HEK293 (cell line): ENCODE measurements at regions of chr19 and their contacts with region 1.

Region 1: DNA sequence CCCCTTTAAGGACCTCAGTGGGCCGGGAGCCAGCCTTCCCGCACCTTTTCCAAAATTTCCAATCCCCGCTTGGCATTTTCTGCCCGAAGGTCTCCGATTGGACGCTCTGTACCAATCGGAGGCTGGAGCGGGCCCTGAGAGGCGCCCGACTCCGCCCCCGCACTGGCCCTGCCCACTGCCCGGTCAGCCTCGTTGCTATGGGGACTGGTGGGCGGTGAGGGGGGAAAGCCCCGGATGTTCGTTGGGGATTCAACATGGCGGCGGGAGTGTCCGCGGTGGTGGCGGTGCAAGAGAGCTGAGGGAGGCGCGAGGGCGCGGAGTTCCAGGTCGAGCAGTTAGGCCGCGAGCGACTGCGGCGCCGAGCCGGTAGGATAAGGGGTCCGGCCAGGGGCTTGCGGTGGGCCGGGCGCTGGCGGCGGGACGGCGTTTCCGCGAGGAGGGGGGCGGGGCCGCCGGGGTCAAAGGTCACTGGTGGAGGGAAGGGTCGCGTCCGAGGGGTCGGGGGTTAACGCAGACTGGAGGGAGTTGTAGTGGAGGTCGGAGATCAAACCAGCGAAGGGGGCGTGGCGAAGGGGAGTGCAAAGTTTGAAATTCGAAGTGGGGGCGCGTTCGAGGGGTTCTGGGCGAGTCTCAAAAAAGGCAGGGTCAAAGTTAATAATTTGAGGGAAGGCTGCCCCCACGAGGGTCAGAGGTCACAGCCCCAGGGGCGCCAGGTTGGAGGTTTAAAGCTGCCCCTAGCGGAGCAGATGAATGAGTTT is at the start of gene PAK4:
- H3K4me3 ChIP-seq: peak within 1 kb of the TSS; percentile 67
- H3K27ac ChIP-seq: peak within 1 kb of the TSS; percentile 88
- H3K4me1 ChIP-seq: peaks cover 24% of the 10 kb centered on the region
- CTCF ChIP-seq: peak; percentile 91

Region 2: DNA sequence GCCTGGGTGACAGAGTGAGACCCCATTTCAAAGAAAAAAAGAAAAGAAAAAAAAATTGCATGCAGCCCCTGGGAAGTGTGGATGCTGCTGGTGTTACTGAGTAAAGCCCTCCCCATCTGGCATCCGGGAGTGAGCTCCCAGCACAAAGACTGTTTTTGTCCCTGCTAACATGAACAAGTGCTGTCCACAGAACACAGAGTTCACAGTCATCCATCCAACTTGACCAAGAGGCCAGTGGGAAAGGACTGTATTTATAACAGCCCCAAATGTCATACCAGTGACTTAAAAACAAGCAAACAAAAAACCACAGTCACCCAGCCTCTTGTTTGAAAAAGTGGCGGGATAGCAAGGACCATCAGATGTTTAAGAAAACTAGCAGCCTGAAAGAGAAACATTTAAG is 161.0 kb before region 1 on chr19:
- CTCF ChIA-PET with region 1: interaction called, 16 read pairs
- POLR2A ChIA-PET with region 1: no interaction called
- H3K4me3 ChIP-seq: no peak overlapping the region
- H3K27ac ChIP-seq: no peak overlapping the region
- H3K4me1 ChIP-seq: peaks cover 8% of the 10 kb centered on the region
- CTCF ChIP-seq: no peak

Region 3: GRCh38 chr19:39199025-39199424 is 73.3 kb after region 1 on chr19:
- CTCF ChIA-PET with region 1: interaction called, 23 read pairs
- POLR2A ChIA-PET with region 1: interaction called, 5 read pairs
- H3K4me3 ChIP-seq: no peak overlapping the region
- H3K27ac ChIP-seq: no peak overlapping the region
- H3K4me1 ChIP-seq: no peaks in the 10 kb centered on the region
- CTCF ChIP-seq: no peak

Region 4: DNA sequence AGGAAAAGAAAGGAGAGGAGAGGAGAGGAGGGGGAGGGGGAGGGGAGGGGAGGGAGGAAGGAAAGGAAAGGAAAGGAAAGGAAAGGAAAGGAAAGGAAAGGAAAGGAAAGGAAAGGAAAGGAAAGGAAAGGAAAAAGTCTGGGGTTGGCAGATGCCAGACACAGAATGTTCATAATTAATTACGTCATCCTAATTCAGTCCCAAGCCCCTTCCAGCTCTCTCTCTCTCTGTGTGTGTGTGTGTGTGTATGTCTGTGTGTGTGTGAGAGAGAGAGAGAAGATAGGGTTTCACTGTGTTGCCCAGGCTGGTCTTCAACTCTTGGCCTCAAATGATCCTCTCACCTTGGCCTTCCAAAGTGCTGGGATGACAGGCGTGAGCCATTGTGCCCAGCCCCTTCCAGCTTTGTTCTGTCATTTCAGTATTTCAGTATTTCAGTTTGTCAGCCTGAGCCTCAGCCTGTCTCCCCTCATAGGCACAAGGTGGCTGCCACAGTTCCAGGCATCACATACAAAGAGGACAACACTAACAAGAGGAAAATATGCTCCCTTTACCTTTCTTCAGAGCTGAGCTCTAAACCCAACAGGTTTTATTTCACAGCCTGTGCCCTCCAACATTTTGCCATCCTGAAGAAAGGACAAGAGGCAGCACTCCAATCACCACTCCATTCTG is 104.5 kb after region 1 on chr19:
- CTCF ChIA-PET with region 1: interaction called, 10 read pairs
- POLR2A ChIA-PET with region 1: no interaction called
- H3K4me3 ChIP-seq: no peak overlapping the region
- H3K27ac ChIP-seq: no peak overlapping the region
- H3K4me1 ChIP-seq: no peaks in the 10 kb centered on the region
- CTCF ChIP-seq: no peak

Region 5: DNA sequence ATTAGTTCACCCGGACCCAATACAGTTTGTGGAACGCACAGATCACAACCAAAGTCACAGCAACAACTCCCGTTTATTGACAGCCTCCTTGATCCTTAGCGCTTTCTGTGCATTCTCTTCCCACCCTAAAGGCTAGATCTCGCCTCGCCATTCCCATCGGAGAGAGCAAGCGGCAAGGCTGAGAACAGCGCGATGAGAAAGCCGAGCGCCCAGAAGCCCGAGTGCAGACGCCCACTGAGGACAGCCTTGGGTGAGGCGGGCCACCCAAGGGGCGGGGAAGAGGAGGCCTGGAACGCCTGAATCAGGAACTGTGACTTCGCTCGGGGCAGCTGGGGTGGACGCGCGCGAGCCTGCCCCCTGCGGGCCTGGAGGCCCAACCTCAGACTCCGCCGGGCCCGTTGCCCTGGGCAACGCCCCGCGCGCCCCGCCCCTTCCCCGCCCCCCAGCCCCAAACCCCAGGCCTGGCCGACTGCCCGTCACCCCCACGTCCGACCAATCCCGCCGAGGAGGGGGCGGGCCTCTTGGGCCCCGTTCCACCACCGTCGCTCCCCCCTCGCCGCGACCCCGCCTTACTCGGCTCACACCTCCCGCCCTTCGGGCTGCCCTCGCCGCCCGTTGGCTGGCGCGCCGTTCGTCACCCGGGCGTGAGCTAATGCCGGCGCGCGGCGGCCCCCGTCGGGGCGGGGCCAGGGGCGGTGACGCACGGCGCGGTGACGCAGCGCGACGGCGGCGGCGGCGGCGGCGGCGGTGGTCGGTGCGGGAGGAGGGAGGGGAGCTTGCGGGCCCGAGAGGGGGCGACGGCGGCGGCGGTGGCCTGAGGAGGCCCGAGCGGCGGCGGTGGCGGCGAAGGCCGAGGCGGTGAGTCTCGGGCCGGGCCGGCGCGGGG is 216.2 kb after region 1 on chr19 and contains the start of gene SAMD4B:
- CTCF ChIA-PET with region 1: interaction called, 14 read pairs
- POLR2A ChIA-PET with region 1: interaction called, 6 read pairs
- H3K4me3 ChIP-seq: peak within 1 kb of the TSS; percentile 67
- H3K27ac ChIP-seq: peak within 1 kb of the TSS; percentile 90
- H3K4me1 ChIP-seq: peaks cover 40% of the 10 kb centered on the region
- CTCF ChIP-seq: peak; percentile 98